ENCODE measurements at regions of chr3 and their contacts with region 1.

Region 1: GRCh38 chr3:184229394-184230080 is at the start of gene VWA5B2:
- DNase-seq: no peak
- H3K4me3 ChIP-seq: peak within 1 kb of the TSS; percentile 44
- H3K27ac ChIP-seq: no peak within 1 kb of the TSS
- H3K27me3 ChIP-seq: peaks cover 52% of the 10 kb centered on the region
- CTCF ChIP-seq: 0 out of 2 replicates have a peak, but pooled peaks have one; percentile 16
- polyA plus RNA-seq, gene VWA5B2: not detected in 2 replicates

Region 2: DNA sequence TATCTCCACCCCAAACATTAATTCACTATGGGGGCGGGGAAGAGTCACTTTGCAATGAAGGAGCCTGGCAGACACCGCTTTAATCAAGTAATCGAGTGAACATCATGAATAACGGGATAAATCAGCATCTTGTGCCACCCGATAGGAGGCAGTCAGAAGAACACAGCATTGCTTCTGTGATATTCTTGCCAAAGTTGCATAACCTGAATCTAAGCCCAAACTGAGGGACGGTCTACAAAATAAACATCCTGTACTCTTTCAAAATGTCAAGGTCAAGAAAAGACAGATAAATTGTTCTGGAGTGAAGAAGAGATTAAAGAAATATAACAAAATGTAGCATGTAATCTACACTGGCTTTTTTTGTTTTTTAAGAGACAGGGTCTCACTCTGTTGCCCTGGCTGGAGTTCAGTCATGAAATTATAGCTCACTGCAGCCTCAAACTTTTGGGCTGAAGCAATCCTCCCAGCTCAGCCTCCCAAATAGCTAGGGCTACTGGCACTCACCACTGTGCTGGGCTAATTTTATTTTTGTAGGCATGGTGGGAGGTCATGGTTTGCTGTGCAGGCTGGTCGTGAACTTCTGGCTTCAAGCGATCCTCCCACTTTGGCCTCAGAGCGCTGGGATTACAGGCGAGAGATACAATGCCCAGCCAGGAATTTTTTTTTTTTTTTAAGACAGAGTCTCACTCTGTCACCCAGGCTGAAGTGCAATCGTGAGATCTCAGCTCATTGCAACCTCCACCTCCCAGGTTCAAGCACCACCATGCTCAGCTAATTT is 20.2 kb before region 1 on chr3:
- CTCF ChIA-PET with region 1: interaction called, 10 read pairs
- POLR2A ChIA-PET with region 1: no interaction called
- DNase-seq: no peak
- H3K4me3 ChIP-seq: no peak overlapping the region
- H3K27ac ChIP-seq: no peak overlapping the region
- H3K27me3 ChIP-seq: peaks cover 13% of the 10 kb centered on the region
- CTCF ChIP-seq: no peak

Region 3: GRCh38 chr3:184218814-184219213 is 10.7 kb before region 1 on chr3:
- CTCF ChIA-PET with region 1: interaction called, 20 read pairs
- POLR2A ChIA-PET with region 1: no interaction called
- DNase-seq: no peak
- H3K4me3 ChIP-seq: no peak overlapping the region
- H3K27ac ChIP-seq: no peak overlapping the region
- H3K27me3 ChIP-seq: peaks cover 13% of the 10 kb centered on the region
- CTCF ChIP-seq: no peak

Region 4: GRCh38 chr3:184241447-184242296 is 12.1 kb after region 1 on chr3:
- CTCF ChIA-PET with region 1: interaction called, 12 read pairs
- POLR2A ChIA-PET with region 1: no interaction called
- DNase-seq: no peak
- H3K4me3 ChIP-seq: no peak overlapping the region
- H3K27ac ChIP-seq: no peak overlapping the region
- H3K27me3 ChIP-seq: peaks cover 11% of the 10 kb centered on the region
- CTCF ChIP-seq: peak; percentile 61

Region 5: DNA sequence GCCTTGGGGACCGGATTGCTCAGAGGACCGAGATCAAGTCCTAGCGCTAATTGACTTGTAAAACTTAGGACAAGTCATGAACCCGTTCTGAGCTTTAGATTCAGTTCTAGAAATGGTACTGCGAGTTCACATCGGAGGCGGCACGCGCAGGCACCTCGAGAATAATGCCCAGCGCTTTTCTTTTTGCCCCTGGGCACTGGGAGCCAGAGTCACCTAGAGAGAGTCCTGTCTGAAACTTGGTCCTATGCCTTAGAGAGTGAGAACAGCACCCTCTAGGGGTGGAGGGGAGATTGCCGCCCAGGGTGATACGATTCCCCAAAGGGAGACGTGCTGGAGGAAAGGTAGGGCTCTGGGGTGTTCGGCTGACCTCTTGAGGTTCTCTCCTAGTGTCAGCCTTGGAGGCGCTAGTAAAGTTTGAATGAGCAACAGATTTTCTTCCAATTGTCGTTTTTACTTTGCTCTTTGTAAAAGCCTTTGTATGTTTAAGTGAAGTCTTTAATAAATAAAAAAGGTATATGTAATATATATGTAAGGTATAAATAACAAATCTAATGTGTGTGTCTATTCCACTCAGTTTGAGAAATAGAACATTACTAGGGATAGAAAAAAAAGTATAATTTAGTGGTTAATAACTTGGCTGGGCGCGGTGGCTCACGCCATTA is 20.8 kb after region 1 on chr3:
- CTCF ChIA-PET with region 1: interaction called, 16 read pairs
- POLR2A ChIA-PET with region 1: interaction called, 3 read pairs
- DNase-seq: peak; percentile 61
- H3K4me3 ChIP-seq: peak overlapping the region; percentile 88
- H3K27ac ChIP-seq: peak overlapping the region; percentile 68
- H3K27me3 ChIP-seq: no peaks in the 10 kb centered on the region
- CTCF ChIP-seq: peak; percentile 97

Region 6: DNA sequence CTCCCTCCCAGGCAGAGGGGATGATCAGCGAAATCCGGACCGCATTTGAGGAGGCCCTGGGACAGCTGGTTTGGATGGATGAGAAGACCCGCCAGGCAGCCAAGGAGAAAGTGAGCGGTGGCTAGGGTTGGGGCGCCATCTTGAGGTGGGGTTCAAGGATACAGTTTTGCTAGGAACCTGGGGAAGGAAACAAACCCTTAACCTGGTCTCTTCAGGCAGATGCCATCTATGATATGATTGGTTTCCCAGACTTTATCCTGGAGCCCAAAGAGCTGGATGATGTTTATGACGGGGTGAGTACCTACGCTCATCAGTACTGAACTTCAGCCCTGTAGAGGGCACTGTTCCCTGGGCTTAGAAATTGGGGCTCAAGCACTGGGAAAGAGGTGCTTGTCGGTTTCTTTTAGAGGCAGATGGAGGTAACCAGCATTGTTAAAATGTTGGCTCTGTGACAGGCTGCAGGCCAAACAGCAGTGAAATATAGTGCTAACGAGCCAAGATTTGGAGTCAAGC is 59.9 kb after region 1 on chr3:
- CTCF ChIA-PET with region 1: interaction called, 10 read pairs
- POLR2A ChIA-PET with region 1: no interaction called
- DNase-seq: no peak
- H3K4me3 ChIP-seq: no peak overlapping the region
- H3K27ac ChIP-seq: no peak overlapping the region
- H3K27me3 ChIP-seq: peaks cover 12% of the 10 kb centered on the region
- CTCF ChIP-seq: peak; percentile 71

Region 7: DNA sequence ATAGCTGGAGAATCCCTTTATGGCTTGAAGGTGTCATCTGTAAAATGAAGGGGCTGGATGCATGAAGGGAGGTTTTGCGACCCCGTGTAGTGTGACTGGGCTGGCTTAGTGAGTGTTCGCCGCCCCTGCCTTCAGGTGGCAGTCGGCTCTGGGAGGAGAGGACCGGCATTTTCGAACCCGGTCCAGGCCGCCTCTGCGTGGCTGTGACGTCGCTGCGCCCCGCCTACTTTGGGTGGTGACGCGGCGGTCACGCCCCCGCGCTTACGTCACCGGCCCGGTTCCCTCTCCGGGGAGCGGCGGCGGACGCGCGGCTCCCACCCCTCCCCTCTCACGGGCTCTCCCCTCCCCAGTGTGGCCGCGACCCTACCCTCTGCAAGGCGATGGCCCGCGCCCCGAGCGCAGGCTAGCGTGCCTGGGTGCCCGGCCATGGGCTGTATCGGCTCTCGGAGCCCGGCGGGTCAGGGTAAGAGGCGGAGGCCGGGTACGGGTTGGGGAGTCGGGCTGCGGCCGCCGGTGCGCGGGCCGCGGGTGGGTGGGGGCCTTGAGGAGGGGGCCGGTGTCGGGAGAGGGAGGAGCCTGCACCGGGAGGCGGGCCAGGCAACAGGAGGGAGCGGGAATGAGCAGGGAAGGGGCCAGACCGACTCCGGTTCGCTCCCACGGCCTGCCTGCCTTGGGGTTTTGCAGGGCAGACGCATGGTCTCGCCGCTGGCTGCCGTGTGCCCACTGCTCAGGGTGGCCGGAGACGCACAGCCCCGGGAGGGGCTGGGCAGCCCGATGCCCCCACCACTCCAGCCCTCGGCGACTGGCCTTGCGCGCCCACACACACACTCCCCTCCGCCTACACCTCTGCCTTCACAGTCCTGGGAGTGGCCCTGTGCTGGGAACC is 106.4 kb after region 1 on chr3:
- CTCF ChIA-PET with region 1: no interaction called
- POLR2A ChIA-PET with region 1: no interaction called
- DNase-seq: no peak
- H3K4me3 ChIP-seq: peak overlapping the region; percentile 69
- H3K27ac ChIP-seq: peak overlapping the region; percentile 92
- H3K27me3 ChIP-seq: no peaks in the 10 kb centered on the region
- CTCF ChIP-seq: no peak

Measured in AG04450 (cell line).